Gastrocnemius medialis (tissue), 4 donors: ENCODE measurements at regions of chr13 and their contacts with region 1.

Region 1: GRCh38 chr13:23558675-23559536 is 11.3 kb upstream of the TNFRSF19 start:
- DNase-seq: peak; percentile 56 to 88
- ATAC-seq: peak; percentile 97 to 98
- H3K4me3 ChIP-seq: peak overlapping the region; percentile 38 to 54 (median 42)
- H3K27ac ChIP-seq: peak overlapping the region; percentile 86 to 96 (median 91)
- H3K4me1 ChIP-seq: peaks cover 19 to 23% of the 10 kb centered on the region in 2 donors
- H3K27me3 ChIP-seq: no peaks in the 10 kb centered on the region
- CTCF ChIP-seq: no peak
- POLR2A ChIP-seq: peak in 1 of 2 donors; percentile 10

Region 2: GRCh38 chr13:23018143-23018542 is 540.8 kb before region 1 on chr13:
- in situ Hi-C with region 1: no loop called
- intact Hi-C with region 1: no loop called
- DNase-seq: no peak
- ATAC-seq: no peak
- H3K4me3 ChIP-seq: no peak overlapping the region
- H3K27ac ChIP-seq: no peak overlapping the region
- H3K4me1 ChIP-seq: no peaks in the 10 kb centered on the region
- H3K27me3 ChIP-seq: peaks cover 0 to 2% (median 0%) of the 10 kb centered on the region in 3 donors
- CTCF ChIP-seq: no peak
- POLR2A ChIP-seq: no peak

Region 3: DNA sequence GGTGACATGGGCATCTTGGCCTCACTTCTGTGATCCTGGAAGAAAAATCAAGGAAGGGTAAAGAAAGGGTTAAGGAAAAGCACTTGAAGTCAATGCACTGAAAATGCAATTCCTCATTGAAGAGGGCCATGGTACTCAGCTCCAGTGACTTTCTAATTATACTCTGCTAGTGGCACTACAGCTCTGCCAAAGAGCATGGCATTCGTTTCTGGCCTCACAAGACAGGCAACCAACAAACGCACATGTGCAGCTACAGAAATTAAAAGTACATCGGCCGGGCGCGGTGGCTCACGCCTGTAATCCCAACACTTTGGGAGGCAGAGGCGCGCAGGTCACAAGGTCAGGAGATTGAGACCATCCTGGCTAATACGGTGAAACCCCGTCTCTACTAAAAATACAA is 147.2 kb before region 1 on chr13:
- in situ Hi-C with region 1: no loop called
- intact Hi-C with region 1: loop called (anchors 2 kb)
- DNase-seq: peak; percentile 56 to 67
- ATAC-seq: peak; percentile 95 to 96
- H3K4me3 ChIP-seq: peak overlapping the region; percentile 30 to 43 (median 36)
- H3K27ac ChIP-seq: peak overlapping the region; percentile 78 to 84 (median 82)
- H3K4me1 ChIP-seq: peaks cover 8 to 24% of the 10 kb centered on the region in 2 donors
- H3K27me3 ChIP-seq: no peaks in the 10 kb centered on the region
- CTCF ChIP-seq: no peak
- POLR2A ChIP-seq: no peak

Region 4: DNA sequence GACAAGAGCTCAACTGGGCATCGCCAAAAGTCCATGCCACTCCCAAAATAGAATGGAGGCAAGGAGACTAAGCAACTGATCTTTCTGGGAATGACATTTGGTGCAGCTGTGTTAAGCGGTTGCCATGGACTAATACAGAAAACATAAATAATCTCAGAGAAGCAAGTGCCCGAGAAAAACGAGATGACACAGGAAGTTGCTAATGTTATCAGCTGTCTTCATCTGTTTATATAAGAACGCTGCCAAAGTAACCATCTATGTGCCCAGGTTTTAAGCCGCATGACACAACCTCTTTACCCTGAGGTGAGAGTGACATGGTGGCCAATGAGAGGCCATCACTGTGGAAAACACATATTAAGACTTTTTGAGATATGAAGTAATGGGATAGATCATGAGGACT is 70.4 kb before region 1 on chr13:
- in situ Hi-C with region 1: no loop called
- intact Hi-C with region 1: loop called (anchors 1 kb)
- DNase-seq: peak in 1 of 2 donors; percentile 72
- ATAC-seq: peak; percentile 95 to 99
- H3K4me3 ChIP-seq: no peak overlapping the region
- H3K27ac ChIP-seq: peak overlapping the region; percentile 53 to 82 (median 63)
- H3K4me1 ChIP-seq: peaks cover 10 to 11% of the 10 kb centered on the region in 2 donors
- H3K27me3 ChIP-seq: no peaks in the 10 kb centered on the region
- CTCF ChIP-seq: no peak
- POLR2A ChIP-seq: no peak

Region 5: GRCh38 chr13:23510979-23511735 is 47.7 kb before region 1 on chr13:
- in situ Hi-C with region 1: no loop called
- intact Hi-C with region 1: loop called (anchors 2 kb)
- DNase-seq: peak; percentile 48 to 49
- ATAC-seq: peak; percentile 77 to 87
- H3K4me3 ChIP-seq: no peak overlapping the region
- H3K27ac ChIP-seq: peak overlapping the region; percentile 58 to 72 (median 68)
- H3K4me1 ChIP-seq: peaks cover 39 to 42% of the 10 kb centered on the region in 2 donors
- H3K27me3 ChIP-seq: no peaks in the 10 kb centered on the region
- CTCF ChIP-seq: peak in 4 of 5 experiments; percentile 22 to 32 (median 25)
- POLR2A ChIP-seq: no peak

Region 6: GRCh38 chr13:24228852-24229458 is 670.0 kb after region 1 on chr13:
- in situ Hi-C with region 1: no loop called
- intact Hi-C with region 1: no loop called
- DNase-seq: no peak
- ATAC-seq: peak in 1 of 2 donors; percentile 55
- H3K4me3 ChIP-seq: no peak overlapping the region
- H3K27ac ChIP-seq: no peak overlapping the region
- H3K4me1 ChIP-seq: no peaks in the 10 kb centered on the region
- H3K27me3 ChIP-seq: no peaks in the 10 kb centered on the region
- CTCF ChIP-seq: peak; percentile 37 to 77 (median 47)
- POLR2A ChIP-seq: no peak